Naive thymus-derived CD4-positive, alpha-beta T cell (primary cell): ENCODE measurements at regions of chr2 and their contacts with region 1.

Region 1: GRCh38 chr2:216130346-216130971 is 21.3 kb downstream of the XRCC5 start:
- DNase-seq: no peak
- ATAC-seq: no peak
- H3K4me3 ChIP-seq: no peak overlapping the region
- H3K4me3 Mint-ChIP-seq: peak overlapping the region in 5 of 10 donors; percentile 6 to 58 (median 42)
- H3K27ac ChIP-seq: no peak overlapping the region
- H3K27ac Mint-ChIP-seq: peak overlapping the region; percentile 6 to 75 (median 56)
- H3K4me1 ChIP-seq: peaks cover 0 to 19% of the 10 kb centered on the region in 2 donors
- H3K4me1 Mint-ChIP-seq: peaks cover 30 to 89% (median 79%) of the 10 kb centered on the region in 7 donors
- H3K27me3 ChIP-seq: no peaks in the 10 kb centered on the region
- H3K27me3 Mint-ChIP-seq: no peaks in the 10 kb centered on the region

Region 2: GRCh38 chr2:215900843-215901242 is 229.6 kb before region 1 on chr2:
- CTCF ChIA-PET with region 1: no interaction called
- POLR2A ChIA-PET with region 1: no interaction called
- intact Hi-C with region 1: no loop called
- DNase-seq: no peak
- ATAC-seq: peak; percentile 30
- H3K4me3 ChIP-seq: no peak overlapping the region
- H3K4me3 Mint-ChIP-seq: peak overlapping the region in 1 of 10 donors; percentile 9
- H3K27ac ChIP-seq: no peak overlapping the region
- H3K27ac Mint-ChIP-seq: no peak overlapping the region
- H3K4me1 ChIP-seq: no peaks in the 10 kb centered on the region
- H3K4me1 Mint-ChIP-seq: peaks cover 0 to 6% (median 4%) of the 10 kb centered on the region in 7 donors
- H3K27me3 ChIP-seq: no peaks in the 10 kb centered on the region
- H3K27me3 Mint-ChIP-seq: peaks cover 4 to 30% (median 18%) of the 10 kb centered on the region in 5 donors

Region 3: GRCh38 chr2:216119986-216120385 is 10.5 kb before region 1 on chr2:
- CTCF ChIA-PET with region 1: interaction called, 3 read pairs
- POLR2A ChIA-PET with region 1: interaction called, 5 read pairs
- intact Hi-C with region 1: loop called in 1 of 2 experiments (anchors 1 kb)
- DNase-seq: peak in 6 of 9 donors; percentile 19 to 64 (median 48)
- ATAC-seq: peak; percentile 75
- H3K4me3 ChIP-seq: no peak overlapping the region
- H3K4me3 Mint-ChIP-seq: peak overlapping the region; percentile 6 to 99 (median 60)
- H3K27ac ChIP-seq: peak overlapping the region; percentile 47
- H3K27ac Mint-ChIP-seq: peak overlapping the region; percentile 70 to 90 (median 86)
- H3K4me1 ChIP-seq: peaks cover 12 to 41% of the 10 kb centered on the region in 2 donors
- H3K4me1 Mint-ChIP-seq: peaks cover 48 to 94% (median 87%) of the 10 kb centered on the region in 7 donors
- H3K27me3 ChIP-seq: no peaks in the 10 kb centered on the region
- H3K27me3 Mint-ChIP-seq: no peaks in the 10 kb centered on the region

Region 4: GRCh38 chr2:216151313-216152030 is 21.0 kb after region 1 on chr2:
- CTCF ChIA-PET with region 1: no interaction called
- POLR2A ChIA-PET with region 1: interaction called, 3 read pairs
- intact Hi-C with region 1: loop called in 1 of 2 experiments (anchors 2 kb)
- DNase-seq: no peak
- ATAC-seq: no peak
- H3K4me3 ChIP-seq: no peak overlapping the region
- H3K4me3 Mint-ChIP-seq: no peak overlapping the region
- H3K27ac ChIP-seq: no peak overlapping the region
- H3K27ac Mint-ChIP-seq: peak overlapping the region in 7 of 9 donors; percentile 13 to 73 (median 43)
- H3K4me1 ChIP-seq: no peaks in the 10 kb centered on the region
- H3K4me1 Mint-ChIP-seq: peaks cover 21 to 70% (median 37%) of the 10 kb centered on the region in 7 donors
- H3K27me3 ChIP-seq: no peaks in the 10 kb centered on the region
- H3K27me3 Mint-ChIP-seq: no peaks in the 10 kb centered on the region

Region 5: DNA sequence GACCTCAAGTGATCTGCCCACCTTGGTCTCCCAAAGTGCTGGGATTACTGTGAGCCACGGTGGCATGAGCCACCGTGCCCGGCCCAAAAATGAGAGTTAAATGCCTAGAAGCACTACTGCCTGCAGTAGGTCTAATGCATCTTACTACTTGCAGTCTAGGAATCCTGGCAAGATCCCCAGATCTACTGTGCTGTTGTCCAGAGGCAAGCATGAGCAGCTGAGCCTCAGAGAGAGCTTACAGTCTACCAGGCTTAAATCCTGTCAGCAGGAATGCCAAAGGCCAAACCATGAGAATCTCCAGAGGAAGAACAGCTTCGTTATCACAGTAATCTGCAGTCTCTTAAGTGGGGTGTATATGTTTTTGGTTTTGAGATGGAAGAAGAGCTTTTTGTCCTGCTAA is 33.1 kb after region 1 on chr2:
- CTCF ChIA-PET with region 1: no interaction called
- POLR2A ChIA-PET with region 1: no interaction called
- intact Hi-C with region 1: loop called in 1 of 2 experiments (anchors 5 kb)
- DNase-seq: no peak
- ATAC-seq: no peak
- H3K4me3 ChIP-seq: no peak overlapping the region
- H3K4me3 Mint-ChIP-seq: no peak overlapping the region
- H3K27ac ChIP-seq: no peak overlapping the region
- H3K27ac Mint-ChIP-seq: peak overlapping the region in 2 of 9 donors; percentile 17 to 19
- H3K4me1 ChIP-seq: no peaks in the 10 kb centered on the region
- H3K4me1 Mint-ChIP-seq: peaks cover 9 to 64% (median 45%) of the 10 kb centered on the region in 7 donors
- H3K27me3 ChIP-seq: no peaks in the 10 kb centered on the region
- H3K27me3 Mint-ChIP-seq: no peaks in the 10 kb centered on the region